Vagina (tissue), 2 donors: ENCODE measurements at regions of chr17 and their contacts with region 1.

Region 1: DNA sequence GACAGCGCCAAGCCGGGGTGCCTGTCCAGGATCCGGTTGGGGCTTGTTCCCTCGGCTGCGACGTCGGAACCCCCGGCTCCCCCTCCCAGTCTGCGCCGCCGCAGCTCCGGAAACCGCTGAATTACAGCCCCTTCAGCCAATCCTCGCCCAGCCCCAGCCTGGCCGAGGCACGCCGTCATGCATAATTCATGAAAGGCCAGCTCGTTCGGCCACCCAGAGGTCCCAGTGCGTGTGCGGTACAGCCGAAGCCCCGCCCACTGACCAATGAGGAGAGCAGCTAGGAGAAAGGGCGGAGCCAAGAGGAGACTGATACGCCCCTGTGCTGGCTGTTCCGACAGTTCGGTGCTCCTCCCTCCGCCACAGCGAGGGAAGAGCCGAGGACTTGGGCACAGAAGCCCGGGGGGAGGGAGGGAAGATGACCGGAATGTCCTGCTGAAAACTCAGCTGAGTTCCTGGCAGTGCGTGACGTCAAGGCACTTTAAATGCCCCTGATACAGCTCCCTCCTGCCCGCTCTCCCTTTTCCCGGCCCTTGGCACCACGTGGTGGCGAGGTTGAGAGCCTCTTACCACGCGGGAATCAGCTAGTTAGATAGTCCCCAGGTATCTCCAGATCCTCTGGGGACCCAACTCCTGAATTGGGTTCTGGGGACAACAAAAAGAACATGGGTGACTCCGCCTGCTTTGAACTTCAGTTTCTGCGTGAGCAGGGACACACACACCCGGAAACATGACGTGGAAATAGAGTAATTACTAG is at the start of gene STAT3:
- DNase-seq: peak; percentile 100
- H3K4me3 ChIP-seq: peak within 1 kb of the TSS; percentile 68 to 96
- H3K27ac ChIP-seq: peak within 1 kb of the TSS; percentile 99
- H3K4me1 ChIP-seq: peaks cover 39% of the 10 kb centered on the region
- H3K27me3 ChIP-seq: no peaks in the 10 kb centered on the region
- CTCF ChIP-seq: peak in 2 of 3 experiments; percentile 5 to 8
- POLR2A ChIP-seq: peak; percentile 27 to 98
- total RNA-seq, gene STAT3: 210 TPM

Region 2: DNA sequence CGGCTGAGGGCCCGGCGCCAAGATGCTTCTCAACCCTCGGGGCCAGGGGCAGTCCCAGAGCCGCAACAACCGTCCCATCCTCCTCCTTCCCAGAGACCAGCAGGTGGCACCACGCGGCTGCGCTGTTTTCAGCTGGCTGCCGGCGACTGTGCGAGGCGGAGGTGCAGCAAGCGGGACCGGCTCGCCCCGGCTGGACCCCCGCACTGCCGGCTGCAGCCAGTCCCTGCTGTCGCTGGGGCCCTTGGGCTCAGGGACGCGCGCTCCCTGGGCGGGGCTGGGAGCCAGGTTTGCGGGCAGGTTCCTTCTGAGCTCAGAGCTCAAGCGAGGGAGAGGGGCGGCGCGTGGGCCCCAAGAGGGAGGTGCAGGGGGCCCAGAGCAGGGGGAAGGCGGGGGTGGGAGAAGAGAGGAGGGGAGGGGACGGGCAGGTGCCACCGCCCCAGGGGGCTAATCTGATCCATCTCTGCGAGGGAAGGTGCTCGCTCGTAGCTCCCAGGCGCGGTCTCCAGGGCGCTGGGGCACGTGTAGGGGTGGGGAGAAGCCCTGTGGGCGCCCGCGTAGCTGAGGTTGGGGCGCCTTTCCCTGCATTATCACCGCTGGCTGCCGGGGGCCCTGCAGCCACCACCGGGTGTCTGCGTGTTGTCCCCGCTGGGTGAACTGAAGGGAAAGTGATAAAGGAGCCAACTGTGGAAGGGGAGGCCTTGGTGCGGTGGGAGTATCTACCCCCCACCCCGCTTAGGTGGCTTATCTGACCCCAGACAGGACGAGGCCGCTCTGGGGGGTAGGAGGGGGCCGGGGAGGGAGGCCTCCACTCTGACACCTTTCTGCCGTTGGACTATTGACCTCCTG is 76.0 kb before region 1 on chr17:
- intact Hi-C with region 1: no loop called
- DNase-seq: no peak
- H3K4me3 ChIP-seq: peak overlapping the region; percentile 22 to 38
- H3K27ac ChIP-seq: peak overlapping the region; percentile 92
- H3K4me1 ChIP-seq: peaks cover 38% of the 10 kb centered on the region
- H3K27me3 ChIP-seq: no peaks in the 10 kb centered on the region
- CTCF ChIP-seq: peak in 2 of 3 experiments; percentile 49 to 68
- POLR2A ChIP-seq: no peak

Region 3: GRCh38 chr17:42347198-42347597 is 41.4 kb before region 1 on chr17:
- intact Hi-C with region 1: loop called (anchors 5 kb)
- DNase-seq: no peak
- H3K4me3 ChIP-seq: no peak overlapping the region
- H3K27ac ChIP-seq: peak overlapping the region; percentile 31
- H3K4me1 ChIP-seq: peaks cover 46% of the 10 kb centered on the region
- H3K27me3 ChIP-seq: no peaks in the 10 kb centered on the region
- CTCF ChIP-seq: no peak
- POLR2A ChIP-seq: no peak

Region 4: GRCh38 chr17:42438600-42439567 is 50.3 kb after region 1 on chr17:
- intact Hi-C with region 1: no loop called
- DNase-seq: no peak
- H3K4me3 ChIP-seq: no peak overlapping the region
- H3K27ac ChIP-seq: no peak overlapping the region
- H3K4me1 ChIP-seq: peaks cover 4% of the 10 kb centered on the region
- H3K27me3 ChIP-seq: no peaks in the 10 kb centered on the region
- CTCF ChIP-seq: no peak
- POLR2A ChIP-seq: no peak